Psoas muscle (tissue), 8 donors: ENCODE measurements at regions of chrX and their contacts with region 1.

Region 1: DNA sequence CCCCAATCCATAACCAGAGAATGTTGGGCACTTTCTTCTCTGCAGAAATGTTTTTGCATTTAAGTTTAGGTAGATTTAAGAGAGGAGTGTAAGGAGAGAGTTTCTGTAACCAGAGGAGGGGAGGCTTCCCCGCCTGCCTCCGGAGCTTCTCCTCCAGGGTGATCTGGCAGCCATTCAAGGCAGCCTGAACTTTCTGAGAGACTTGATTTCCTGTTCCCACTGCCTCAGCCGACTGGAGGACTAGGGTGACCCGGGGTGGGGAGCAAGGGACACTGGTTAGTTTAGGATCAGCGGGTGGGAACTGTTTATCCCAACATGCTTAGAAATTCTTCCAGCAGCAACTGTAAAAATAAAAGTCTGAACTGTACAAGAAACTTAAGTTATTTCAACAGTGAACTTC is 15.1 kb downstream of the FAM9C start:
- DNase-seq: peak; percentile 26 to 64
- ATAC-seq: no peak
- H3K4me3 ChIP-seq: no peak overlapping the region
- H3K27ac ChIP-seq: no peak overlapping the region
- H3K4me1 ChIP-seq: no peaks in the 10 kb centered on the region
- H3K27me3 ChIP-seq: peaks cover 0 to 6% (median 0%) of the 10 kb centered on the region in 3 donors
- CTCF ChIP-seq: no peak

Region 2: GRCh38 chrX:12505127-12505526 is 524.2 kb before region 1 on chrX:
- intact Hi-C with region 1: no loop called
- DNase-seq: no peak
- ATAC-seq: no peak
- H3K4me3 ChIP-seq: no peak overlapping the region
- H3K27ac ChIP-seq: no peak overlapping the region
- H3K4me1 ChIP-seq: no peaks in the 10 kb centered on the region
- H3K27me3 ChIP-seq: no peaks in the 10 kb centered on the region
- CTCF ChIP-seq: no peak

Region 3: GRCh38 chrX:13103914-13104274 is 74.6 kb after region 1 on chrX:
- intact Hi-C with region 1: loop called in 1 of 2 experiments (anchors 2 kb)
- DNase-seq: no peak
- ATAC-seq: no peak
- H3K4me3 ChIP-seq: no peak overlapping the region
- H3K27ac ChIP-seq: no peak overlapping the region
- H3K4me1 ChIP-seq: peaks cover 4% of the 10 kb centered on the region
- H3K27me3 ChIP-seq: no peaks in the 10 kb centered on the region
- CTCF ChIP-seq: no peak